ENCODE measurements at regions of chr20 and their contacts with region 1.

Region 1: GRCh38 chr20:10708351-10709185 is 34.8 kb upstream of the JAG1 start:
- DNase-seq: peak in 1 of 2 experiments; percentile 55
- H3K4me3 ChIP-seq: no peak overlapping the region
- H3K4me3 Mint-ChIP-seq: peak overlapping the region; percentile 31
- H3K27ac Mint-ChIP-seq: peak overlapping the region; percentile 58
- H3K4me1 ChIP-seq: peaks cover 42% of the 10 kb centered on the region
- H3K4me1 Mint-ChIP-seq: peaks cover 30% of the 10 kb centered on the region
- H3K27me3 ChIP-seq: no peaks in the 10 kb centered on the region
- H3K27me3 Mint-ChIP-seq: no peaks in the 10 kb centered on the region
- CTCF ChIP-seq: no peak

Region 2: DNA sequence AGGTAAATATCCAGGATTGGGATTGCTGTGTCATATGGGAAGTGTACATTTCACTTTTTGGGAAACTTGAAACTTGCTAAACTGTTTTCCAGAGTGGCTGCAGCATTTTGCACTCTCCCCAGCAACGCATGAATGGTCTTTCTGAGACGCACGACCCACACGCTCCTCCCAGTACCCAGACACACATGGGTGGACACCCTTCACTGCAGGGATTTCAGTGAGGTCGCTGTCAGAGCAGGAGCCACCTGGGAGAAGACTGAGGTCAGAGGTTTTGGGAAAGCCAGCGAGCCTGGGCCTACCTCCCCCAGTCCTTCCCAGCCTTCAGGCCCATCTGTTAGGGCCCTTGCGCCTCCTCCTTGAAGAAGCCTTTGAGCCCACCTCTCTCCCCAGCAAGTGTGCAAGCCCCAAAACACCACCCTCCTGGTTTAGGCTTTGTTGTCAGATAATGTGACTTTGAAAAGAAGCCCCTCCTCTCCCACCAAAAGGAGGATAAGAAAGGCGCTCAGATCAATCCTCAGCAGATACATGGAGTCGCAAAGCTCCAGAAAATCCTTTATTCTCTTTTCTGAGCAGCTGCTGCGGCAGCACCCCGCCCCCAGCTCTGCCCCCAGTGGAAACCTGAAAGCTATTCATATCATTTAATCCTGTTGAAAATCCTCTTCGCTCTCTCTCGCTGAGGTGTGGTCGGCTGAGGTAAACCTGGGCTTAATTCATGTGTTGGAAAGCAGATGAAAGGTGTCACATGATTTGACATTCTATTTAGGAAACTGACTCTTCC is 22.0 kb before region 1 on chr20:
- CTCF ChIA-PET with region 1: no interaction called
- POLR2A ChIA-PET with region 1: no interaction called
- intact Hi-C with region 1: loop called (anchors 2 kb)
- DNase-seq: no peak
- H3K4me3 ChIP-seq: no peak overlapping the region
- H3K4me3 Mint-ChIP-seq: no peak overlapping the region
- H3K27ac Mint-ChIP-seq: no peak overlapping the region
- H3K4me1 ChIP-seq: peaks cover 4% of the 10 kb centered on the region; the same call in 1 of the 2 replicates
- H3K4me1 Mint-ChIP-seq: no peaks in the 10 kb centered on the region
- H3K27me3 ChIP-seq: no peaks in the 10 kb centered on the region
- H3K27me3 Mint-ChIP-seq: no peaks in the 10 kb centered on the region
- CTCF ChIP-seq: no peak

Region 3: DNA sequence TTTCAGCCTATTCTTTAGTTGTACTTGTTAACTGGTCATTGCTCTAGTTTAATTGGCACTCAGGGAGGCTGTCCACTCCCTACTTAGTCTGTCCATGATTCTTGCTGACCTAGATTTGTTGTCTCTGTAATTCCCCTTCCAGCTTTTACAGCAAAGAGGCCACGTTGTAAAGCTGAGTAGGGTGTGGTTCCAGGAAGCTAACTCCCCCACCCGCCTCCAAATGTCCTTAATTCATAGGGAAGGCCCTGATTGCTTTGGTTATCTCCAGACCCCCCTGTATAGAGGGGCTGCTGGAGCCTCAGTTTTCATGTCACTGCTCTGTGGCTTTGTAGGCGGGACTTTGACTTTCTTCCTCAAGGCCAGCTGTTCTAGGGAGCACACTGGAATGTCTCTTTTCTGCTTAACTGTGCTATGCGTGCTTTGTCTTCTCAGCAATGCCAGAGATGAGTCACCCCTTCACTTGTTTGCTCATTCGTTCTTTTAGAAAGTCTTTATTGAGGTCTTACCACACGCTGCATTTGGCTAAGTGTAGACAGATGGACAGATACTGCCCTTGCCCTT is 140.3 kb after region 1 on chr20:
- CTCF ChIA-PET with region 1: no interaction called
- POLR2A ChIA-PET with region 1: no interaction called
- intact Hi-C with region 1: loop called (anchors 5 kb)
- DNase-seq: peak; percentile 69 to 79
- H3K4me3 ChIP-seq: no peak overlapping the region
- H3K4me3 Mint-ChIP-seq: peak overlapping the region; percentile 9
- H3K27ac Mint-ChIP-seq: peak overlapping the region; percentile 66
- H3K4me1 ChIP-seq: peaks cover 20% of the 10 kb centered on the region
- H3K4me1 Mint-ChIP-seq: peaks cover 39% of the 10 kb centered on the region
- H3K27me3 ChIP-seq: no peaks in the 10 kb centered on the region
- H3K27me3 Mint-ChIP-seq: no peaks in the 10 kb centered on the region
- CTCF ChIP-seq: no peak